ENCODE measurements at regions of chr13 and their contacts with region 1.

Region 1: GRCh38 chr13:107124129-107124718 is 556.3 kb upstream of the ARGLU1 start:
- DNase-seq: no peak
- H3K4me3 Mint-ChIP-seq: no peak overlapping the region
- H3K27ac Mint-ChIP-seq: no peak overlapping the region
- H3K4me1 Mint-ChIP-seq: no peaks in the 10 kb centered on the region
- H3K27me3 Mint-ChIP-seq: peaks cover 9% of the 10 kb centered on the region
- CTCF ChIP-seq: no peak

Region 2: DNA sequence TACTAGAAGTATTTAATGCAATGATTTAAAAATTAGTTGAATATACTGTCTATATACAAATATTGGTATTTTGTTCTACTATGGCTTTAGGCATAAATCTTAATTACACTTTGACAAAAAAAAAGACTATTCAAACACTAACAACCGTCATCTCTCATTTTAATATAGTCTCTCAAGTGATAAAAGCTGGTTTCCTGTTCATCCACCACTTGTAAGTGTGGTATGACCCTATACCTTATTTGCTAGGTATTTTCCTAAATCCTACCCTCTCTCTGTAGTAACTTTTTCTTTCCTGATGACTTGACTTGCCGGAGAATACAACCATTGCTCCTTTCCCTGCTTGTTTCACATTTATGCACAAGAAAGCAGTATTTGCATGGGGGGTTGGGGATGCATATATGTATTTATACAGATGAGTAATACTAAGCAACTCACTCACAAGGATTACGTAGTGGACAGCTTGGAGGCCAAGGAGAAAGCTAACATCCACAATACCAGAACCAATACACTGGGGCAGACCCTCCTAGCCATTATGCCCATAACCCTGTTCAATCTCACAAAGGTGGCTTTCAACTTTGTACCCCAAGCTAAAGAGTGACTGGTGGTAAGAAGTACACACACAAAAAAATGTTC is 576.0 kb before region 1 on chr13:
- CTCF ChIA-PET with region 1: no interaction called
- intact Hi-C with region 1: loop called (anchors 10 kb)
- DNase-seq: no peak
- H3K4me3 Mint-ChIP-seq: no peak overlapping the region
- H3K27ac Mint-ChIP-seq: no peak overlapping the region
- H3K4me1 Mint-ChIP-seq: no peaks in the 10 kb centered on the region
- H3K27me3 Mint-ChIP-seq: no peaks in the 10 kb centered on the region
- CTCF ChIP-seq: no peak

Region 3: DNA sequence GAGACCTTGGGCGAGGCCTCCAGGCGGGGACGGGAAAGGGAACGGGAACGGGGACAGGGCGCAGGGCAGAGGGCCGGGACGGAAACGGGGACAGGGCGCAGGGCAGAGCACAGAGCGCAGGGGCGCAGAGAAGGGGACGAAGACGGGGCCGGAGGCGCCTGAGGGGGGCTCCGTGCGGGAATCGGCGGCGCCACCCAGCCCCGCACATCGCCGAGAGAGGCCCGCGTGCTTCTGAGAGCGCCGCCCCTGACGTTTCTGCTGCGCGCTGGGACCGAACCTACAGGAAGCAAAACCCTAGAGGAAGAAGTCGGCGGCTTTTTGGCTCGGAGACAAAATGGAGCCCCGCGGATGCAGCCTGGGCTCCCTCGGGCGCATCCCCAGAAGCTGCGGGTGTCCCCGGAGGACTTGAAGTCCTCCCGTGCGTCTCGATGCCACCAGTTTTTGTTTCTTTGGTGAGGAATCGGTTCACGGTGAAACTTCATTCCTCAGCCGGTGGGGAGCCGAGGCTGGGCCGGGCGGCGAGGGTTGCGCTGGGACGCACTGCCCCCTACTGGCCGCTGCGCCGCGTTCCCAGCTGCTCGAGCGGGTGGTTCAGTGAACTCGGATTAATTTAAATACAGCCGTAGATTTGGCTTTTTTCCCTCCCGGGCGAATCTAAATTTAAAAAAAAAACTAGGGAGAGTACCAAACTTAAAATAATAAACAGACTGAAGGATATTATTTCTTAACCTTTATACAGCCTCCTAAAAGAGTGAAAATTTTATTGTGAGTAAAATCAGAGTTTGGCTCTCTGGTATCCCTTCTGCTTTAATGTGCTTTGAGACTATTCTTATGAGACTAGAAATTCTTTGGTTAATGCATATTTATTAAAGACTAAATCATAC is 206.3 kb before region 1 on chr13:
- CTCF ChIA-PET with region 1: no interaction called
- intact Hi-C with region 1: loop called (anchors 5 kb)
- DNase-seq: peak; percentile 69
- H3K4me3 Mint-ChIP-seq: peak overlapping the region; percentile 53
- H3K27ac Mint-ChIP-seq: no peak overlapping the region
- H3K4me1 Mint-ChIP-seq: no peaks in the 10 kb centered on the region
- H3K27me3 Mint-ChIP-seq: no peaks in the 10 kb centered on the region
- CTCF ChIP-seq: peak; percentile 43